Heart left ventricle (tissue), 16 donors: ENCODE measurements at regions of chr4 and their contacts with region 1.

Region 1: GRCh38 chr4:184649026-184649970 is at the starts of genes CASP3 and PRIMPOL:
- DNase-seq: peak; percentile 97 to 99 (median 98)
- ATAC-seq: peak; percentile 92 to 98 (median 95)
- H3K4me3 ChIP-seq: peak within 1 kb of the TSS; percentile 65 to 95 (median 88)
- H3K27ac ChIP-seq: peak within 1 kb of the TSS; percentile 89 to 99 (median 98)
- H3K4me1 ChIP-seq: peaks cover 5 to 53% (median 48%) of the 10 kb centered on the region in 12 donors
- H3K27me3 ChIP-seq: no peaks in the 10 kb centered on the region
- CTCF ChIP-seq: peak in 11 of 12 donors; percentile 9 to 60 (median 24)
- POLR2A ChIP-seq: peak in 1 of 2 donors; percentile 92
- total RNA-seq, gene CASP3: 7.3 to 32.0 (median 15.8) TPM
- total RNA-seq, gene PRIMPOL: 5.4 to 12.4 (median 10.6) TPM

Region 2: GRCh38 chr4:184282251-184282713 is 367.0 kb before region 1 on chr4:
- intact Hi-C with region 1: loop called in 3 of 10 experiments (anchors 10 kb)
- DNase-seq: no peak
- ATAC-seq: peak in 3 of 4 donors; percentile 56 to 71 (median 65)
- H3K4me3 ChIP-seq: no peak overlapping the region
- H3K27ac ChIP-seq: peak overlapping the region in 4 of 12 donors; percentile 17 to 39 (median 26)
- H3K4me1 ChIP-seq: peaks cover 0 to 33% (median 6%) of the 10 kb centered on the region in 12 donors
- H3K27me3 ChIP-seq: no peaks in the 10 kb centered on the region
- CTCF ChIP-seq: peak in 2 of 12 donors; percentile 18 to 25
- POLR2A ChIP-seq: no peak

Region 3: DNA sequence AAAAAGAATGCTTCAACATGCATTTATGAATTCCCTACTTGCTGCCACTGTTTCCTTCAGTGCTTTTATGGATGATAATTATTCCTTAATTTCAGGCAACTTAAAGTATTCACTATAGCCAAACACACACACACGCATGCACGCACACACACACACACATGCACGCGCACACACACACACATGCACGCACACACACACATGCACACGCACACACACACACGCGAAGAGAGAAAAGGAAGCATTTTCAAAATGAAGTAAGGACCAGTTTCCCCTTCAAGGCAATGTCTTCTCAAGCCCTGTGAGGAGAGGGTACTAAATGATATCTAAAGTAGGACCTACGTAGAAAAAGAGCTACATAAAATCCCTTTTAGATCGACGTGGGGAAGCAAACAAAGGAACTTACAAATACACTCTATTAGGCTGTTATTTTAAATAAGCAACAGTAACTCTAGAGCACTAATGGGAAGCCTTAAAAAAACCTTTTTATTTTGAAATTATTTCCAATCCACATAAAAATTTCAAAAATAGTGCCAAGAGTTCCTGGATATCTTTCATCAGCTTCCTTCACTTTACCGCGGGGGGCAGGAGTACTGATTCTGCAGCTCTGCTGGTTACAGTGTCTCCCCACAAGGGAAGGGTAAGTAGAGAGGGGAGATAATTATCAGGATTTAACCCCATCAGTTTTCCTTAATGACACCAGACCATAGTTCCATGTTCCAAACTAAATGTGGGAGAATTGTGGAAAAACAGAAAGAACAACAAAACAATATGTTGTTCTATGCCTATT is 188.6 kb before region 1 on chr4:
- intact Hi-C with region 1: loop called in 1 of 10 experiments (anchors 10 kb)
- DNase-seq: no peak
- ATAC-seq: no peak
- H3K4me3 ChIP-seq: no peak overlapping the region
- H3K27ac ChIP-seq: peak overlapping the region in 1 of 12 donors; percentile 27
- H3K4me1 ChIP-seq: peaks cover 14 to 80% (median 58%) of the 10 kb centered on the region in 12 donors
- H3K27me3 ChIP-seq: no peaks in the 10 kb centered on the region
- CTCF ChIP-seq: no peak
- POLR2A ChIP-seq: no peak

Region 4: GRCh38 chr4:184503869-184504300 is 145.4 kb before region 1 on chr4:
- intact Hi-C with region 1: no loop called
- DNase-seq: no peak
- ATAC-seq: peak in 1 of 4 donors; percentile 68
- H3K4me3 ChIP-seq: no peak overlapping the region
- H3K27ac ChIP-seq: peak overlapping the region in 1 of 12 donors; percentile 32
- H3K4me1 ChIP-seq: peaks cover 0 to 29% (median 0%) of the 10 kb centered on the region in 12 donors
- H3K27me3 ChIP-seq: no peaks in the 10 kb centered on the region
- CTCF ChIP-seq: no peak
- POLR2A ChIP-seq: no peak

Region 5: DNA sequence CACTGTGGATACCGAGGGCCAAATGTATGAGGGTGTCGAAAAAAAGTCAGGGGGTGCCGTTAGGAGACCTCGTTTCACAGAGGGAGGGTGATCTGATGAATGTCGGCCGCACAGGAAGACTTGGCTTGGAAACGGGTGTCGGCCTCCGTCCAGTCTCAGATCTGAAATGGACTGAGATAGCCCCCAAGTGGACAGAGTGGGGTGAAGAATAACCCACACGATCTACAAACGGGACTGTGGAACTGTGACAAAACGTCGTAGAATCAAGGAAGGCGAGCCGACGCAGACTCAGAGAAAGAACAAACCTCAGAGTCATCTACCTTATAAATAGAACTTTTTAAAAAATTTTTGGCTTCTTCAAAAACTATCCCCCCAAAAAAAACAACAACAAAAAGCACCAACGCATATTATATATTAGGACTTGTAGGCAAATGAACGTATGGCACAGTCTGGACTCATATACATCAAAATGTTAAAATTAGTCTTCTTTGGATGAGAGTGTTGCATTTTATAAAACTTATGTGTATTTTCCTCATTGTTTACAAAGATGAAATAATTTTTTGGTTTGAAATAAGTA is 111.2 kb before region 1 on chr4:
- intact Hi-C with region 1: loop called in 1 of 10 experiments (anchors 2 kb)
- DNase-seq: peak; percentile 90 to 92 (median 91)
- ATAC-seq: peak; percentile 91 to 94 (median 92)
- H3K4me3 ChIP-seq: peak overlapping the region; percentile 50 to 82 (median 67)
- H3K27ac ChIP-seq: peak overlapping the region; percentile 91 to 99 (median 95)
- H3K4me1 ChIP-seq: peaks cover 0 to 43% (median 25%) of the 10 kb centered on the region in 12 donors
- H3K27me3 ChIP-seq: no peaks in the 10 kb centered on the region
- CTCF ChIP-seq: peak; percentile 50 to 86 (median 72)
- POLR2A ChIP-seq: no peak

Region 6: DNA sequence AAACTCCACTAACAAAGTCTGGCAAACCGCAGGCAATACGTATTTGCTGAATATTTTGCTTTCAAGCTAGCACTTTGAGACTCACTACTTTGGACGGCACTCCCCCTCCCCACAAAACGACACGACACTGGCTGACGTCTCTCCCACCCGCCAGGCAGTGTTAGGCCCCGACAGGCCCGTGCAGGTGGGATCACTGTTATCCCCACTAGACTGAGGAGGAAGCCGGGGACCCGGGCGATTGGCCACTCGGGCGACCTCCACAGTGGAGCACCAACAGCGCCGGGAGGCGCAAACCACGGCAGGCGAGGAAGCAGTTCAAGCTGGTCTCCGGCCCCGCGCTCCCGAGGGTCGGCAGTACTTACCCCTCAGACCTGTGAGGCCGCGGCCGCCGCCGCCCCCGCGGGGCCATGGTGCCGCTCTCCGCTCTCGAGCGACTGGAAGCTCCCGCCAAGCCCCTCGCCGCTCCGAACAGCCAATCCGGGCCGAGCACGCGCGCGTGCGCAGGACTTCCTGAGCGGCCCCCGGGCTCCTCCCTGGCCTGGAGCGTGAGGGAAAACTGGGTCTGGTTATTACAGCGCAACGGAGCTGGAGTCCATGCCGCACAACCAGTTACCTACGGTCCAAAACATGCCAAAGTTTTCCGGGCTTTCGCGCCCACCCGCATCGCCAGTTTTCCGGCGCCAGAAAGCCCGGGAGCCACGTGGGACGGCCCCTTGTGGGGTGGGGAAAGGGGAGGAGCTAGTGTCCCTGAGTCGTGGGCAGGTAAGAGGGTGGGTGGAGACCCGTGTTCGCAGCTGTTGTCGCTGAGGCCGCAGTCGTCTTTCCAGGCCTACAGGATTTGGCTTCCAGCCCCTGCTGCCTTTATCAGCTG is 84.6 kb after region 1 on chr4 and contains the start of gene CENPU:
- intact Hi-C with region 1: loop called in 8 of 10 experiments (anchors 1 to 10 kb)
- DNase-seq: peak; percentile 96 to 98 (median 97)
- ATAC-seq: peak; percentile 99 to 100 (median 100)
- H3K4me3 ChIP-seq: peak within 1 kb of the TSS; percentile 45 to 94 (median 71)
- H3K27ac ChIP-seq: peak within 1 kb of the TSS in 11 of 12 donors; percentile 45 to 82 (median 62)
- H3K4me1 ChIP-seq: peaks cover 0 to 20% (median 11%) of the 10 kb centered on the region in 12 donors
- H3K27me3 ChIP-seq: no peaks in the 10 kb centered on the region
- CTCF ChIP-seq: peak in 1 of 12 donors; percentile 3
- POLR2A ChIP-seq: peak in 1 of 2 donors; percentile 73
- total RNA-seq, gene CENPU: 0.36 to 7.1 (median 1.3) TPM

Region 7: DNA sequence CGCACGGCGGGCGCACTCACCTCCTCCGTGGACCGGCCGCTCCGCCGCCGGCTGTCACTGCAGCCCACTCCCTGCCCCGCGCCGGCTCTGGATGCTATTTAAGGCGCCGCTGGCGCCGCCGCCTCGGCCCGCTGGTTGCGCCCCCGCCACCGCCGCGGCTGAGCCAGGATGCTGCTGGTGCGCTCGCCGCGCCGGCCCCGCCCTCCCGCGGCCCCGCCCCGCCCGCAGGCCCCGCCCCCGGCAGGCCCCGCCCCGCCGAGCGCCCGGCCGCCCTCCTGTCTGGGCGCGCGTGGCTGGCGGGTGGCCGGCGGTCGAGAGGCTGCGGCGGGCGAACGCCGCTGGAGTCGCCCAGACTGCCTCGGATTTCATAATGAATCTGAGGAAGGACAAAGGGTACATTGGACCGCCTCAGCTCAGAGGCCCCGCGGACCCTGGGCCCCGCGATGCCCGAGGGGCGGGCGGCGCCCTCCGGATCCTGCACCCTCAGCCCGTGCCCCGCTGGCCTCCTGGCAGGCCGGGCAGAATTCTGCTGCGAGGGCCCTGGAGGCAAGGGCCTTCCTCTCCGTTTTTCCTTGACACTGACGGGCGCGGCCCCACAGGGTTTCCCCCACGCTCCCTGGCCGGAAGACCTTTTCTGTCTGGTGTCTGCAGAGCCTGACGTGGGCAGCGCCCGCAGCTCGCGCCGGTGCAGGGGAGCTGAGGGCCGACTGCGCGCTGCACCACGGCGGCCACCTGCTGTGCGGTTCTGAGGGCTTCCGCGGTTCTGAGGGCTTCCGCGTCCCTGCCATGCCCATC is 176.8 kb after region 1 on chr4 and contains the start of gene ACSL1:
- intact Hi-C with region 1: loop called in 2 of 10 experiments (anchors 10 kb)
- DNase-seq: peak; percentile 85 to 94 (median 92)
- ATAC-seq: peak; percentile 64 to 94 (median 88)
- H3K4me3 ChIP-seq: peak within 1 kb of the TSS; percentile 50 to 91 (median 70)
- H3K27ac ChIP-seq: peak within 1 kb of the TSS; percentile 33 to 94 (median 84)
- H3K4me1 ChIP-seq: peaks cover 2 to 50% (median 27%) of the 10 kb centered on the region in 12 donors
- H3K27me3 ChIP-seq: no peaks in the 10 kb centered on the region
- CTCF ChIP-seq: peak in 1 of 12 donors; percentile 9
- POLR2A ChIP-seq: peak; percentile 97
- total RNA-seq, gene ACSL1: 171 to 603 (median 266) TPM